ENCODE measurements at regions of chr5 and their contacts with region 1.

Region 1: DNA sequence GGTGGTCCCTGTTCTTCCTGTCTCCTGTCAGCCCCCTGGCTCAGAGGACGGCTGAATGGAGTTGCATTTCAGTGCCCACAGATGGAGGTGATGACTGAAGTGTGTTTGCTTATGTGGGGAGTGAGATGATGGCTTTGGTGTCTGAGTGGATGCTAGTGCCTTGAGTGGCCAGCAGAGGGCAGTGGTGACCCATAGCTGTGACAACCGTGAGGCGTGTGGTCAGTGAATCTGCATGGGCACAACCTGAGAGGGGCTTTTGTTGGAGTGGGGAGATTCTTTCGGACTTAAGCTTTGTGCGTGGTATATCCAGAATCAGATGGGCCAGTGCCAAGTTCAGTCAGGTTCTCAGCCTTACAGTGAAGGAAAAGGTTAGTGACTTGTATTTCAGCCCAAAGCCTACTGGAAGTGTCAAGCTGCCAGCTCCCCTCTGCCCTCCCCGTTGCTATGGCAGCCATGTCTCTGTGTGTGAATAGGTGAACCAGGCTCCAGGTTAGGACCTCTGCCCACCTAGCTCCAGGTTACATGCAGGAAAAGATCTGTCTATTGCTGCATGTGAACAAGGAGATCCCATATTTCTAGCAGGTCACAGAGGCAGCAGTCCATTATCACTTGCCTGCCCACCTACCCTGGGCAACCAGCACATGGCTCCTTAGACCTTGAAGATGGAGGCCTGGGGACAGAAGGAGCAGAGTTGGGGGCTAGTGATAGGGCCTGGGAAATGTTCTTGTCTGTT is 14.7 kb upstream of the CXXC5 start:
- DNase-seq: peak; percentile 39 to 87 (median 54)
- ATAC-seq: peak; percentile 47
- H3K4me3 ChIP-seq: no peak overlapping the region
- H3K4me3 Mint-ChIP-seq: no peak overlapping the region
- H3K27ac ChIP-seq: no peak overlapping the region
- H3K27ac Mint-ChIP-seq: no peak overlapping the region
- H3K4me1 ChIP-seq: peaks cover 49% of the 10 kb centered on the region
- H3K4me1 Mint-ChIP-seq: peaks cover 37% of the 10 kb centered on the region
- H3K27me3 ChIP-seq: no peaks in the 10 kb centered on the region
- H3K27me3 Mint-ChIP-seq: no peaks in the 10 kb centered on the region
- CTCF ChIP-seq: peak; percentile 89

Region 2: DNA sequence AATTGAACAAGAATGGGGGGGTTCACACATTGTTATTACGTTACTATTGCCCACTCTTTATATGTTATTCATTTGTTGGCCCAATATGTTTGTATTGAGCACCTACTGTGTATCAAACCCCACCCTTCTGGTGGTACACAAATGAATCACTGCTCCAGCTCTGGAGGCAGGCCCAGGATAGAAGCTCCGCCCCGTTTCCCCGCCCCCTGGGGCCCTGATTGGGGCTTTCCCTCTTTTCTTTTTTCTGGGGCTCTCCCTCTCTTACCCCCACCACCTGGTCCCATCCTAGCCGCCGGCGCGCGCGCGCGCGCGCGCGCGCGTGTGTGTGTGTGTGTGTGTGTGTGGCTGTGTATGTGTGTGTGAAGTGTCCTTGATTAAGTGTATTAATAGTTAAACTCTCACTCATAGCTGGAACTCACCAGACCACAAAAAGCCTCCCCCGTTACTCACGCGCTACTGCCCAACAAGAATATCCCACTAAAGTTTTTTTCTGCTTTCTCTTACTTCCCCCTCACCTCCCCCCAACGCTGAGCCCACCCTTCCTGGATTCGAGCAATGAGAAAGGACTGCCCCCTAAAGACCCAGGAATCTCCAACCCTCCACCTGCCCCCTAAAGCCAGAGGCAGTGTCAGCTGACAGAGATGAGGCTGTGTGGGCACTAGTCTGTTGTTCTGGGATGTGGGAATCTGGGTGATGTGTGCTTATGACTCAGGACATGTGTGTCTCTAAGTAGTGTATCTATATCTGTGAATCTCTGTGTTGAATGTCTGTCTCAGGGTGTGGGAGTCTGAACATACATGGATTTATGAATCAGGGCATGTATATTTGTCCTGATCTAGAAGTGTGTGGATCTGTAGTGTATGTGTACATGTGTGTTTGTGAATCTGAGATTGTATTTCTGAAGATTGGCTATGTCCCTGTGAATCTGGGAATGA is 18.7 kb after region 1 on chr5:
- CTCF ChIA-PET with region 1: interaction called, 22 read pairs
- POLR2A ChIA-PET with region 1: interaction called, 15 read pairs
- intact Hi-C with region 1: loop called in 1 of 2 experiments (anchors 2 kb)
- DNase-seq: peak in 11 of 14 experiments; percentile 38 to 79 (median 52)
- ATAC-seq: peak; percentile 45
- H3K4me3 ChIP-seq: no peak overlapping the region
- H3K4me3 Mint-ChIP-seq: peak overlapping the region; percentile 45
- H3K27ac ChIP-seq: peak overlapping the region in 1 of 2 donors; percentile 38
- H3K27ac Mint-ChIP-seq: no peak overlapping the region
- H3K4me1 ChIP-seq: peaks cover 40% of the 10 kb centered on the region
- H3K4me1 Mint-ChIP-seq: peaks cover 27% of the 10 kb centered on the region
- H3K27me3 ChIP-seq: peaks cover 39 to 67% of the 10 kb centered on the region in 2 experiments
- H3K27me3 Mint-ChIP-seq: peaks cover 64% of the 10 kb centered on the region
- CTCF ChIP-seq: no peak

Region 3: DNA sequence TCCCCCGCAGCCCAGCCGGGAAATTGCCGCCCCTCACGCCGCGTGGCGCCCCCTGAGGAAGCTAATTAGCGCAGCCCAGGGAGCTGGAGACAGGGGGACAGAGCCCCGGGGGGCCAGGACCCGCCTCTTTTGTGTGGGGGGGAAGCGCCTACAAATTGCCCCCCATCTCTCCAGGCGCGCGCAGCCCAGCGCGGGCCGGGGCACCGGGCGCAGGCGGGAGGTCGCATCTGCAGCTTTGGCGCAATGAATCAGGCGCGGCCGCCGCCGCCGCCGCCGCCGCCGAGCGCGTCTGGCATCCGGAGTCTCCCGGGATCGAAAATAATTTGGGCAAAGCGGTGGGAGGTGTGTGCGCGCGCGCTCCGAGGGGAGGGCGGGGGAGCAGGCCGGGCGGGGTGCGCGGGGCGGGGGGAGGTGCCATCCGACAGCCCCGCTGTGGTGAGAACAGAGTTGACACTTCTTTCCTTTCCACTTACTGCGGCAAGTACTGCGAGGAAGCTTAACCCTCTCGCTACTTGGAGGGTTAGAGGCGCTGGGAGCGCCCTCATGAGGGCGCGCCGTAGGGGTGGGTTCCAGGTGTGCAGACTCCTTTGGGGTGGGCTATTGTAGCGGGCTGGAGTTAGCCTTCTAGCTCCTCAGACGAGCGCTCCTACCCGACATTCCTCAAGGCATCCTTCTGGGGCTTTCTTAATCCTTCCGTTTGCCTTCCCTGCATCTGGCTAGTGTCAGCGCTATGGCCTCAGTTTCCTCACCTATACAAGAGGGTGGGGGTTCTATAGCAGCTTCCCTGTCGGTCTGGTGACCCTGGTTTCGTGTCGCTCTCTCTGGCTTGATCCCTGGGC is 77.8 kb after region 1 on chr5:
- CTCF ChIA-PET with region 1: interaction called, 10 read pairs
- POLR2A ChIA-PET with region 1: interaction called, 7 read pairs
- intact Hi-C with region 1: loop called in 1 of 2 experiments (anchors 5 kb)
- DNase-seq: peak in 13 of 14 experiments; percentile 26 to 82 (median 52)
- ATAC-seq: peak; percentile 69
- H3K4me3 ChIP-seq: peak overlapping the region; percentile 60
- H3K4me3 Mint-ChIP-seq: peak overlapping the region; percentile 80
- H3K27ac ChIP-seq: no peak overlapping the region
- H3K27ac Mint-ChIP-seq: peak overlapping the region; percentile 36
- H3K4me1 ChIP-seq: peaks cover 34% of the 10 kb centered on the region
- H3K4me1 Mint-ChIP-seq: peaks cover 30% of the 10 kb centered on the region
- H3K27me3 ChIP-seq: peaks cover 5 to 7% of the 10 kb centered on the region in 2 experiments
- H3K27me3 Mint-ChIP-seq: peaks cover 16% of the 10 kb centered on the region
- CTCF ChIP-seq: no peak

Region 4: GRCh38 chr5:139765409-139766217 is 132.2 kb after region 1 on chr5:
- CTCF ChIA-PET with region 1: interaction called, 172 read pairs
- POLR2A ChIA-PET with region 1: interaction called, 6 read pairs
- intact Hi-C with region 1: loop called (anchors 1 kb)
- DNase-seq: peak; percentile 71 to 92 (median 78)
- ATAC-seq: peak; percentile 92
- H3K4me3 ChIP-seq: peak overlapping the region; percentile 60
- H3K4me3 Mint-ChIP-seq: peak overlapping the region; percentile 48
- H3K27ac ChIP-seq: no peak overlapping the region
- H3K27ac Mint-ChIP-seq: no peak overlapping the region
- H3K4me1 ChIP-seq: peaks cover 19% of the 10 kb centered on the region
- H3K4me1 Mint-ChIP-seq: peaks cover 9% of the 10 kb centered on the region
- H3K27me3 ChIP-seq: peaks cover 29 to 30% of the 10 kb centered on the region in 2 experiments
- H3K27me3 Mint-ChIP-seq: peaks cover 50% of the 10 kb centered on the region
- CTCF ChIP-seq: peak; percentile 100

Measured in CD4-positive, alpha-beta T cell (primary cell).